Panc1 (cell line): ENCODE measurements at regions of chr7 and their contacts with region 1.

Region 1: GRCh38 chr7:157875230-157876179 is 538.7 kb downstream of the DNAJB6 start:
- DNase-seq: no peak
- ATAC-seq: peak; percentile 88
- H3K4me3 ChIP-seq: no peak overlapping the region
- H3K27ac ChIP-seq: no peak overlapping the region
- H3K4me1 ChIP-seq: no peaks in the 10 kb centered on the region
- H3K27me3 ChIP-seq: no peaks in the 10 kb centered on the region; the same call in 1 of the 2 replicates
- CTCF ChIP-seq: peak; percentile 89

Region 2: GRCh38 chr7:157432957-157433576 is 442.4 kb before region 1 on chr7:
- CTCF ChIA-PET with region 1: no interaction called
- POLR2A ChIA-PET with region 1: no interaction called
- in situ Hi-C with region 1: no loop called
- intact Hi-C with region 1: loop called (anchors 10 kb)
- DNase-seq: peak; percentile 28
- ATAC-seq: peak; percentile 54
- H3K4me3 ChIP-seq: peak overlapping the region; percentile 16 to 49; a peak in 2 of 4 replicates
- H3K27ac ChIP-seq: no peak overlapping the region
- H3K4me1 ChIP-seq: peaks cover 4% of the 10 kb centered on the region; the same call in 1 of the 2 replicates
- H3K27me3 ChIP-seq: no peaks in the 10 kb centered on the region
- CTCF ChIP-seq: peak; percentile 84